Activated naive CD4-positive, alpha-beta T cell treated with anti-CD3 and anti-CD28 coated beads for 36 hours (primary cell): ENCODE measurements at regions of chr1 and their contacts with region 1.

Region 1: DNA sequence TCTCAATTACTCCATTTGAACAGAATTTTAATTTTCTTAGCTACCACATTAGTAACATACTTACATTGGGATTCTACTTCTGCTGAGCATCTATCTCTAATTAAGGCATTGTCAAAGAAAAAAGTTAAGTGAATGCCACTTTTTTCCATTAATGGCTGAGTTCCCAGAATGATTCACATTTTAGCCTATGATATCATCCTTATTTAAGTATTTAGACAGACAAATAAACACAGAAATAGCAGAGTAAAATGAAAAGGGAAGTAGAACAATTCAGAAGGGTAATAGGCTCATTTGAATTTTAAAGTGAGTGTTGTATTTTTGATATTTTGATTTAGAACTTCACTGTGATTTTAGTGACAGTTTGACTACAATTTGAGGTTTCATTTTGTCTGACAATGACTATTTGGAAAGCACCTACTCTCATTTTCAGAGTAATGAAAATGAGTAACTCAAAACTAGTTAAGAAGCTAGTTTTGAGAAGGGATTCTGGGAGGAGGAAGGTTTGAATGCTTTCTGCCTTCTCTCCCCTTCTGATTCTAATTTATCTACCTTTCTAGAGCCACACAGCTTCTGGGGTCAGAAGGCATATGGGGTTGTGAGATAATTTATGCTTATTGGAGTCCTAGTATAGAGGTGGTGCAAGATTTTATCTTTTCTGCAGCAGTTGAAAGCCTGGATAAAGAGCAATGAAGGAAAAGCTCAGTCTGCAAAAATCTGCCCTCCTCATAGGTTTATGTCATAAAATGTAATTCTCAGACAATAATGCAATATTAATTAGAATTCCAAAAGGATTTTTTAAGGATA is 15.5 kb downstream of the LYPLAL1 start:
- DNase-seq: no peak
- H3K4me3 Mint-ChIP-seq: no peak overlapping the region
- H3K27ac Mint-ChIP-seq: peak overlapping the region; percentile 43
- H3K4me1 Mint-ChIP-seq: peaks cover 32% of the 10 kb centered on the region
- H3K27me3 Mint-ChIP-seq: no peaks in the 10 kb centered on the region

Region 2: DNA sequence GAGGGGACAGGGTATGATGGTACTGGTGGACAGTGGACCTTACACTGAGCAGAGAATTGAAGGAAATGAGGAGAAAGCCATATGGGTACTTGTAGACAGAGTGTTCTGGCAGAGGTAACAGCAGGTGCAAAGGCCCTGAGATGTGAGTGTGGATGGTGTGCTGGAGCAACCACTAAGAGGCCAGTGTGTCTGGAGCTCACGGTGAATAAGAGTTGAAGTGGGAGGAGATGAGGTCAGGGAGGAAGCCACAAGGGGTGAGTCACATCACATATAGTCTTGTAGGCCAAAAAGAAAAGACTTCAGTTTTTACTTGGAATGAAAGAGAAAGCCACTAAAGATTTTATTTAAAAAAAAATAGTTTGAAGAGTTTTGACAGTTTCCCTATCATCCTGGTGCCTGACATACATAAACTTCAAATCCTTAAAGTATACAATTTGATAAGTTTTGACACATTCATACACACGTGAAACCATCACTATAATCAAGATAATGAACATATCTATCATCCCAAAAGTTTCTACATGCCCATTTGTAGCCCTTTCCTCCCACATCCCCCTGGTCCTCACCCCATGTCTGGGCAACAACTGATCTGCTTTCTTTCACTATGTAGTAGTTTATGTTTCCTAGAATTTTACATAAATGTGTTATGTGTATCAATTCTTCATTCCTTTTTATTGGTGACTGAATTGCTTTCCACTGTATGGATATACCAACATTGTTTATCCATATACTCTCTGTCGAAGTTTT is 1706.7 kb before region 1 on chr1:
- CTCF ChIA-PET with region 1: no interaction called
- intact Hi-C with region 1: loop called (anchors 5 kb)
- DNase-seq: peak; percentile 80
- H3K4me3 Mint-ChIP-seq: no peak overlapping the region
- H3K27ac Mint-ChIP-seq: peak overlapping the region; percentile 51
- H3K4me1 Mint-ChIP-seq: peaks cover 21% of the 10 kb centered on the region
- H3K27me3 Mint-ChIP-seq: no peaks in the 10 kb centered on the region

Region 3: DNA sequence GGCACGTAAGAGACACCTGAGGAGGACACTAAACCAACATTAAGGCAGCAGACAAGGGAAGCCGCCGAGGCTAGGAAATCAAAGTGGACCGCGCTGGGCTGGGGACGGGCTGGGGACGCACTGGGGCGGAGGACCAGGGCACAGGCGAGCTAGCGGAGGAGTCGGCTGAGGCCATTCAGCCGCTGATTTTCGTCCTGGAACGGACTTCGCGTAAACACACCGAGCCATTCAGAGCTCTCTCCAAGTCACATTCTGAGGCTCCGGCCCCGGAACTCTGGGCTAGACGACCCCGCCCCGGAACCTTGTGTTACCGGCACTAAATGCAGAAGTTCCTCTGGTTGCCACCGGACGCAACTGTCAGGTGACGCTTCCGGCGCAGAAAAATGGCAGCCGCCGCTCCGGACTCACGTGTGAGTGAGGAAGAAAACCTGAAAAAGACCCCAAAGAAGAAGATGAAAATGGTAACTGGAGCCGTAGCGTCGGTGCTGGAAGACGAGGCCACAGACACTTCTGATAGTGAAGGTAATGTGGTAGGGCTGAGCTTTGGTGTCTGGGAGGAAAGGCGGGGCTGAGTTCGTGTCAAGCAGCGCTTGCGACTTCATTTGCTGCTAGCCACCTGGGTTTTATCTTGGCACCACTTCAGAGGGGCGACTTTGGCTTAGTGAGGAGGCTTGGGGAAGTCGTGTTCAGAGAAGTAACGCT is 904.1 kb before region 1 on chr1 and contains the start of gene RRP15:
- CTCF ChIA-PET with region 1: no interaction called
- intact Hi-C with region 1: loop called (anchors 5 kb)
- DNase-seq: peak; percentile 92
- H3K4me3 Mint-ChIP-seq: peak within 1 kb of the TSS; percentile 95
- H3K27ac Mint-ChIP-seq: peak within 1 kb of the TSS; percentile 83
- H3K4me1 Mint-ChIP-seq: peaks cover 26% of the 10 kb centered on the region
- H3K27me3 Mint-ChIP-seq: peaks cover 6% of the 10 kb centered on the region
- total RNA-seq, gene RRP15: 12.6 to 13.7 TPM

Region 4: GRCh38 chr1:218299416-218299815 is 889.8 kb before region 1 on chr1:
- CTCF ChIA-PET with region 1: no interaction called
- intact Hi-C with region 1: loop called (anchors 1 kb)
- DNase-seq: no peak
- H3K4me3 Mint-ChIP-seq: no peak overlapping the region
- H3K27ac Mint-ChIP-seq: no peak overlapping the region
- H3K4me1 Mint-ChIP-seq: peaks cover 27% of the 10 kb centered on the region
- H3K27me3 Mint-ChIP-seq: no peaks in the 10 kb centered on the region

Region 5: DNA sequence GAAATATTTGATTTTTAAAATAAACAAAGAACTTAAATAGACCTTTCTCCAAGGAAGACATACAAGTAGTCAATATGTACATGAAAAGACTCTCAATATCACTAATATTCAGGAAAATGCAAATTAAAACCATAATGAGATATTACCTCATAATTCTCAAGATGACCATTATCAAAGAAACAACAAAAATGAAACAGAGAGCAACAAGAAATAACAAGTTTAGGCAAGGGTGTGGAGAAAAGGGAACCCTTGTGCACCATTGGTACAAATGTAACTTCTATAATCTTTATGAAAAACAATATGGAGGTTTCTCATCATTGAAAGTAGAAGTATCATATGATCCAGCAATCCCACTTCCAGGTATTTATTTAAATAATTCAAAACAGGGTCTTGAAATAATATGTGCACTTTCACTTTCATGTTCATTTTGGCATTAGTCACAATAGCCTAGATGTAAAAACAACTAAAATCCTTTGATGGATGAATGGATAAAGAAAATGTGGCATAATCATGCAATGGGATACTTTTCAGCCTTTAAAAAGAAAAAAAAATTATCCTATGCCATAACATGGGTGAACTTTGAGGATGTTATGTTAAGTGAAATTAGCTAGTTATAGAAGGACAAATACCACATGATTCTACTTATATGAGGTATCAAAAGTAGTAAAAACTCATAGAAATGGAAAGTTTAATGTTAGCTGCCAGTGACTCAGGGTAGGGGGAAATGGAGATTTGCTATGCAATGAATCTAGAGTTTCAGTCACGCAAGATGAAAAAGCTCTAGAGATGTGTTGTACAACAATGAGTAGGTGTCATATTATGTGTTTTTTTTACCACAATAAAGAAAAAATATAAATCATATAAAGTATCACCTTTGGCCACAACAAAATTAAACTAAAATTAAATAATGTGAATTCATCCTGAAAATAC is 130.1 kb before region 1 on chr1:
- CTCF ChIA-PET with region 1: interaction called, 4 read pairs
- intact Hi-C with region 1: loop called (anchors 1 kb)
- DNase-seq: no peak
- H3K4me3 Mint-ChIP-seq: no peak overlapping the region
- H3K27ac Mint-ChIP-seq: no peak overlapping the region
- H3K4me1 Mint-ChIP-seq: peaks cover 10% of the 10 kb centered on the region
- H3K27me3 Mint-ChIP-seq: peaks cover 6% of the 10 kb centered on the region

Region 6: GRCh38 chr1:219159946-219160645 is 29.1 kb before region 1 on chr1:
- CTCF ChIA-PET with region 1: no interaction called
- intact Hi-C with region 1: no loop called
- DNase-seq: no peak
- H3K4me3 Mint-ChIP-seq: no peak overlapping the region
- H3K27ac Mint-ChIP-seq: no peak overlapping the region
- H3K4me1 Mint-ChIP-seq: no peaks in the 10 kb centered on the region
- H3K27me3 Mint-ChIP-seq: peaks cover 7% of the 10 kb centered on the region

Region 7: GRCh38 chr1:219271818-219272535 is 82.8 kb after region 1 on chr1:
- CTCF ChIA-PET with region 1: no interaction called
- intact Hi-C with region 1: no loop called
- DNase-seq: no peak
- H3K4me3 Mint-ChIP-seq: no peak overlapping the region
- H3K27ac Mint-ChIP-seq: no peak overlapping the region
- H3K4me1 Mint-ChIP-seq: no peaks in the 10 kb centered on the region
- H3K27me3 Mint-ChIP-seq: no peaks in the 10 kb centered on the region

Region 8: DNA sequence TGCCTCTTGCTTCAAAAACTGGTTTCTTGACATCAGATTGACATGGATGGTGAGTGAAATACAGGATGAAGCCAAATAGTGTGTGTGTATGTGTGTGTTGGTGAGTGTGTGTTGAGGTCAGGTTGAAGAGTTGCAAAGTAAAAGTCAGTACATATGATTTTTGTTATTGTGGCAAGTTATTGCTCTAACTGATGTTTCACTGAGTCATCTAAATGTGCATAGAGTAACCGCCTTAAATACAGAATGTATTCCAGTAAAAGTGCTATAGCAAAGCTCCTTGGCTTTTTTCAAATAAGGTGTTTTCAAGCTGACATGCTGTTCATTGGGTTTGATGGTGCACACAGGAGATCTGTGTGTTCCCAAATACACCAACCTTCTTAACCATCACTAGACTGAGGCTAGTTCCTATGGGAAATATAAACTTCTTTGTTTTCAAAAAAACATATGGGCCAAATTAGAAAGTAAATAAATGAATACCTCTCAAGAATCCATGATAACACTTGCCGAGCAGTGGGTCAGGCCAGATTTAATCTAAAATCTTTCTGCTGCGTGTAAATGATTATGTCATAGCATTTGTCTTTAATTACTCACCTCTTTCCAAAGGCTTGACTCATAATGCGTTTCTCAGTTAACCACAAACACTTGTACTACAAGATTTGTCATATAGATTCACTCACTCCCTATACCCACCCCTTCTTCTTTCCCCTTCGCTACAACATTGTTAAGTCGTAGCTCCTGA is 135.6 kb after region 1 on chr1:
- CTCF ChIA-PET with region 1: no interaction called
- intact Hi-C with region 1: loop called (anchors 1 kb)
- DNase-seq: peak; percentile 30
- H3K4me3 Mint-ChIP-seq: no peak overlapping the region
- H3K27ac Mint-ChIP-seq: no peak overlapping the region
- H3K4me1 Mint-ChIP-seq: peaks cover 9% of the 10 kb centered on the region
- H3K27me3 Mint-ChIP-seq: peaks cover 4% of the 10 kb centered on the region

Region 9: DNA sequence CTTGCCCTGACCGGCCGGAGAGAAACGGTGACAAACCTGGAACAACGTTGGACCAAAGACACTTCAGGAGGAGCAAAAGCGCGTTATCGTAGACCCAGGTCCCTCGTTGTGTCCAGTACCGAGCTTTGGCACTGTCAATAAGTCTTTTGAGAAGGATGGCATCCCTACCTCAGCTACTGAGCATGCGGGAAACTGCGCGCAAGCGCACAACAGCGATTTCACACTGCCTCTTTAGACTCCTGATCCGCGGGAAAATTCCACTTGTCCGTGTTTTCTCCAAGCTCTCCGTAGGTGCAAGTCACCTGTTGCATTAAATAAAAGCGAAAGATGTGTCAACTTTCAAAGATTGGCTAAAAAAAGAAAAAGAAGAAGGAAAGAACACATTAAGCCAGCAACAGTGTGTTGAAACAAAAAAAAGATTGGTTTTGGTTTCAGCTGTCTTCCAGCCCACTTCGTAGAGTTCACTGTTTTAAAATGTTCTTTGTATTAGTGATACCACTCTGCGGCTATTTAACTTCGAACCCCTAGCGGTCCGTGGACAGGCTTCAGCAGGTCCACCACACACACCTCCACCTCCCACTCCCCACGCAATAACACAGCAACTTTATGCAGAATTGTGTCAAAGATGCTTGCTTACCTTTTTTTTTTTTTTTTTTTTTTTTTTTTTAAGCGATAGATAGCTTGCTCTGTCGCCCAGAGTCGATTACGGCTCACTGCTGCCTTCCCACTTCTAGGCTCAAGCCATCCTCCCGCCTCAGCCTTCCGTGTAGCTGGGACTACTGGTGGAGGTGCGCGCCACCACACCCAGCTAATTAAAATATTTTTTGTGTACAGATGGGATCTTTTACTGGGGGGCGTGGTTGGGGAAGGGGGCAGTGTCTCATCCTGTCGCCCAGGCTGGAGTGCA is 900.7 kb after region 1 on chr1 and contains the start of gene BPNT1:
- CTCF ChIA-PET with region 1: no interaction called
- intact Hi-C with region 1: loop called (anchors 5 kb)
- DNase-seq: peak; percentile 100
- H3K4me3 Mint-ChIP-seq: peak within 1 kb of the TSS; percentile 91
- H3K27ac Mint-ChIP-seq: peak within 1 kb of the TSS; percentile 85
- H3K4me1 Mint-ChIP-seq: peaks cover 12% of the 10 kb centered on the region
- H3K27me3 Mint-ChIP-seq: no peaks in the 10 kb centered on the region
- total RNA-seq, gene BPNT1: 18.5 to 21.3 TPM